ENCODE measurements at regions of chr9 and their contacts with region 1.

Region 1: GRCh38 chr9:94746541-94747370 is 20.3 kb downstream of the AOPEP start:
- DNase-seq: no peak
- H3K27ac ChIP-seq: no peak overlapping the region
- CTCF ChIP-seq: no peak

Region 2: GRCh38 chr9:94726495-94727191 is 20.1 kb before region 1 on chr9 and contains the start of gene AOPEP:
- CTCF ChIA-PET with region 1: no interaction called
- POLR2A ChIA-PET with region 1: no interaction called
- DNase-seq: peak; percentile 100
- H3K27ac ChIP-seq: peak within 1 kb of the TSS; percentile 69
- CTCF ChIP-seq: no peak

Region 3: DNA sequence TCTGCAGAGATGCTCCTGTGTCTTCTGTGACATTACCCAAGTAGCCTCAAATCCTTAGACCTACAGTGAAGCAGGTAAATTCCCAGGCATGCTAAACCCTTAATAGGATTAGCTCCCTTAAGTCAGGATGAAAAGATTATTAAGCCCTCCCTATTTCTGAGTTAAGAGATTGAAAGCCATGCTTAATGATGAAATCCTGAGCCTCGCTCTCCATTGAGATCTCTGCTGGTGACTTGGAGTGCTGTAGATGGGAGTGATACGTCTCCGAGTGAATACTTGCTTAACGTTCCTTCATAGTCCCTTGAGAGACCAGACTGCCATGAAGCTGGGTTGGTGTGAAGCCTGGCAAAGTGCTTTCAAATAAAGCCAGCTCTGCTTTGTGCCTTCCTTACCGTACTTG is 13.9 kb after region 1 on chr9:
- CTCF ChIA-PET with region 1: interaction called, 10 read pairs
- POLR2A ChIA-PET with region 1: no interaction called
- DNase-seq: no peak
- H3K27ac ChIP-seq: no peak overlapping the region
- CTCF ChIP-seq: no peak

Region 4: DNA sequence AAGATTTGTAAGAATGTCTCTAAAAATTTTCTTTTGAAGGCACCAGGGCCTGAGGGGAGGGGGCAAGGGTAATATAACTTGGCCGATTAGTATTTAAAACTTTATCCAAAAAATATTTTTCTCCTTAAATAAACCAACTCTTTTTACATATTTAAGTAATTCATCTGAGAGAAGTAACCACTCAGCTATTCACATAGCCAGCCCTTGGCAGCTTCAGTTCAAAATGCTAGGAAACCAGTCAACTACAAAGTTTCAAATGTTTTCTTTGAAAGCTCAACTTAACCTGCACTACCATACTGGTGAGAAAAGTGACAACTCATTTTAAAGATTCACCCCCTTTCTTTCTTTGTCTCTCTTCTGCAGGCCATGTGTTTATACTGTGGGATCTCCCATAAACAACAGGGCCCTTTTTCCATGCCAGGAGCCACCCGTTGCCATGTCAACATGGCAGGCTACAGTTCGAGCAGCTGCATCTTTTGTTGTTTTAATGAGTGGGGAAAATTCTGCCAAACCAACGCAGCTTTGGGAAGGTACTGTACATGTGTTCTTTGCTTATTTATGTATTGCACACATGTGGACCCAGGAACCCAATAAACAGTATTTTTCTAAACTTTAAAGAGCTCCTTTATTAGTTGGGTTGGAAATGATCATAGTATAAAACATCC is 26.0 kb after region 1 on chr9:
- CTCF ChIA-PET with region 1: no interaction called
- POLR2A ChIA-PET with region 1: no interaction called
- DNase-seq: no peak
- H3K27ac ChIP-seq: no peak overlapping the region
- CTCF ChIP-seq: no peak

Region 5: DNA sequence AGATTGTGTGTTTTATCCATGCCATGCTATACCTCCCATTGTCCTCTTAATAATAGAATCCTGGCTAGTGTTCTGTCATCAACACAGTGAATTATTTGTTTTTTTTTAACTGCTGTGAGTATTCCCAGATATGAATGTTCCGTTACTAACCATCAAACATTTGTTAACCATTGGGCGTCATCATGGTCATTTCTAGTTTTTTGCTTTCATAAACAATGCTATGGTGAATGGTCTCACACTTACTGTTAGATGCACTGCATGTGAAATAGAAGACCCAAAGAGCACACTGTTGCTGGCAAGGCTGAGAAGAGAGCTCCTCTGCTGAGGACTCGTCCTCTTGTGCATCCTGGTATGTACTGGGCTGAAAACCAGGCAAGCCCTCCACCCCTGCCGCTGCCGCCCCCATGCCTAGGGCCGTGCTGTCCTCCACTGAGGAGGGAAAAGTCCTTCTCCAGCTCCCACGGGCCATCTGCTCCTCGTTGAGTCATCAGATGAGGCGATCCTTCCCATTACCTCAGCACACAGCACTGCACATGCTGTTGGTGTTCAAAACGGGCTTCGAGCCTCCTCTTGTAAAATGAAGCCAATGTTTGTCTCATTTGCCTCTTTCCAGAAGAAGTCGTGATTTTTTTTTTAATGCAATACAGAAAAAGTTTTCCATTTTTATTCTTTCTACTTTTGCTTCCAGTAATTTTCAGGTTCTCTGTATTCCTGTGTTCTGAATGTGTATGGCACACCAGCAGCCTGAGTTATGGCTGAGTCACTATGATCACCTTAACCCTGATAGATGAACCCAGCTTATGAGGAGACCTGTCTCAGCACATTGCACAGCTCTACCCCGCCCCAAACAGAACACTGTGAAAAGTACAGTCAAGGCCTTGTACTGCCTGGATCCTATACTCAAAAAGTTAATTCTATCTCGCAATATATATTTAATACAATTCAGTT is 198.7 kb after region 1 on chr9:
- CTCF ChIA-PET with region 1: no interaction called
- POLR2A ChIA-PET with region 1: no interaction called
- DNase-seq: peak; percentile 75
- H3K27ac ChIP-seq: peak overlapping the region; percentile 85
- CTCF ChIP-seq: no peak

Measured in RWPE1 (cell line).